PC-9 (cell line): ENCODE measurements at regions of chr19 and their contacts with region 1.

Region 1: DNA sequence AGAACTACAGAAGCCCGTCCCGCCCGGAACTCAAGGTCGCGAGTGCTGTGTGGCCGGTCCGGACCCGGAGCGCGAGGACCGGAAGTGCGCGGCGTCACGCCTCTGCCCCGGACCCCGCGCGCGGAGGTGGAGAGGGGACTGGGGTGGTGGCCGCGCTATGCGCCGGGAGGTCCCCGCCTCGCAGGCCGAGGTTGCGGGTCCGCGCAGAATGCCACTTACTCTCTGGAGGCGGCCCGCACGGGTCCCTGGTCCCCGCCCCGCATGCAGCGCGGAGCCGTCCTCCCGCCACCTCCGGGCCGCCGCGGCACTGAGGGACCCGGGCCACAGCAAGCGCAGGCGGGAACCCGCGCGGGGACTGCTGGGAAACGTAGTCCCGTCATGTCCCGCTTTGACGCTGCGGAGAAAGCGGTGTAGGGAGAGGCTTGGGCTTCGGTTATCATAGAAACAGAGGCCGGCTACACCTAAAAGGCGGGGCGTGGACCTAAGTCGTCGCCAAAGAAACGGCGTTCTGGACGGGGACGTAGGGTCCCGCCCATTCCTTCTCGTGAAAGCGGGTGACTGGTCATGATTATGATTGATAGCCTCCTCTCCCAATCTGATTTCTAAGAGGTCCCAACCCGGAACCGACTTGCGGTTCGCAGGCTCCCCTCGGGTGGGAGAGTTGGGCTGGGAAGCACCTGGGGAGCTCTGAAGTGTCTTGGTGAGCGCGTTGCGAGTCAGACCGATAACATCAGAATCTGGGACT is at the start of gene ZNF837:
- DNase-seq: peak; percentile 96 to 98
- H3K4me3 ChIP-seq: peak within 1 kb of the TSS; percentile 92
- H3K27ac ChIP-seq: no peak within 1 kb of the TSS
- H3K4me1 ChIP-seq: peaks cover 12% of the 10 kb centered on the region
- H3K27me3 ChIP-seq: no peaks in the 10 kb centered on the region
- CTCF ChIP-seq: no peak
- total RNA-seq, gene ZNF837: 3.3 and 4.1 TPM in 2 replicates

Region 2: DNA sequence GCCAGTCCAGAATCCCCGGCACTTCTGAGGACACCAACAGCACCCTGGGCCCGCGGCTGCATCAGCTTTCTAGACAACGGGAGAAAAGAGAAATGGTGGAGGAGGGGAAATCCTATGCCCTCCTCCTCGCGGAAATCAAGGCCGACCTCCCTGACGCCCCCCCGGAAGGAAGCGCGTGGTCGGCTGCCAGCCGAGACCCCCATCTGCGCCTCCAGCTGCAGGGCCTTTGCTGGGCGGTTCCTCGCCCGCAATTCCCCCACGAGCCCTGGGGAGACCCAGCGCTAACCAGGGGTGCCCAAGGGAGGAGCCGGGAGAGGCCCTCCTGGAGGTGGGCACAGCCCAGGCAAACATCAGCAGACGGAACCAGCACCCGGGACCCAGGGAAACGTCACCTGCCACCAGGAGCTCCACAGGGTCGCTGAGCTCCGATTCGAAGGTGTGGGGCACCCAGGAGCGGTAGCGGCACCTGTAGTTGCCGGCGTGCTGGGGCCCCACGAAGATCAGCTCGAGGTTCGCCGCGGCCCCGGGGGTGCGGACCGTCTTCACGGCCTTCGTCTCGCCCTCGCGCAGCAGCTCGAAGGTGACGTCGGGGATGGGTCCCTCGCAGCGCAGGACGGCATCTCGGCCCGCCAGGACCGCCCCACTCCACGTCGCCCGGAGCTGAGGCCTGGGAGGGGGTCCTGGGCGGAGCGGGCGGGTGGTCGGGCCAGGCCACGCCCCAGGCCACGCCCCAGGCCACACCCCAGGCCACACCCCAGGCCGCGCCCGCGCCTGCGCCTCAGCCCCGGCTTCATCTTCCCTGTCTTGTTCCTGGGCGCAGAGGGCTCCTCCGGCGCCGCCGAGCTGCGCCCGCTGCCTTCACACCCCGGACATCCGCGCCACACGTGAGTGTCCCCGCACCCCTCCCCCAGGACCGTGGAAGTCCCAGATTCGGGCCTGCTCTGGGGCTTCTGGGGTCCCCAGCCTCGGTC is 33.6 kb before region 1 on chr19:
- CTCF ChIA-PET with region 1: no interaction called
- POLR2A ChIA-PET with region 1: interaction called, 26 read pairs
- intact Hi-C with region 1: no loop called
- DNase-seq: no peak
- H3K4me3 ChIP-seq: no peak overlapping the region
- H3K27ac ChIP-seq: no peak overlapping the region
- H3K4me1 ChIP-seq: no peaks in the 10 kb centered on the region
- H3K27me3 ChIP-seq: no peaks in the 10 kb centered on the region
- CTCF ChIP-seq: no peak

Region 3: GRCh38 chr19:58362272-58362994 is 18.5 kb before region 1 on chr19 and contains the start of gene ZNF497:
- CTCF ChIA-PET with region 1: no interaction called
- POLR2A ChIA-PET with region 1: interaction called, 4 read pairs
- intact Hi-C with region 1: loop called (anchors 1 kb)
- DNase-seq: peak; percentile 88 to 96
- H3K4me3 ChIP-seq: peak within 1 kb of the TSS; percentile 69
- H3K27ac ChIP-seq: peak within 1 kb of the TSS; percentile 89
- H3K4me1 ChIP-seq: no peaks in the 10 kb centered on the region
- H3K27me3 ChIP-seq: no peaks in the 10 kb centered on the region
- CTCF ChIP-seq: no peak
- total RNA-seq, gene ZNF497: 7.2 and 8.6 TPM in 2 replicates

Region 4: DNA sequence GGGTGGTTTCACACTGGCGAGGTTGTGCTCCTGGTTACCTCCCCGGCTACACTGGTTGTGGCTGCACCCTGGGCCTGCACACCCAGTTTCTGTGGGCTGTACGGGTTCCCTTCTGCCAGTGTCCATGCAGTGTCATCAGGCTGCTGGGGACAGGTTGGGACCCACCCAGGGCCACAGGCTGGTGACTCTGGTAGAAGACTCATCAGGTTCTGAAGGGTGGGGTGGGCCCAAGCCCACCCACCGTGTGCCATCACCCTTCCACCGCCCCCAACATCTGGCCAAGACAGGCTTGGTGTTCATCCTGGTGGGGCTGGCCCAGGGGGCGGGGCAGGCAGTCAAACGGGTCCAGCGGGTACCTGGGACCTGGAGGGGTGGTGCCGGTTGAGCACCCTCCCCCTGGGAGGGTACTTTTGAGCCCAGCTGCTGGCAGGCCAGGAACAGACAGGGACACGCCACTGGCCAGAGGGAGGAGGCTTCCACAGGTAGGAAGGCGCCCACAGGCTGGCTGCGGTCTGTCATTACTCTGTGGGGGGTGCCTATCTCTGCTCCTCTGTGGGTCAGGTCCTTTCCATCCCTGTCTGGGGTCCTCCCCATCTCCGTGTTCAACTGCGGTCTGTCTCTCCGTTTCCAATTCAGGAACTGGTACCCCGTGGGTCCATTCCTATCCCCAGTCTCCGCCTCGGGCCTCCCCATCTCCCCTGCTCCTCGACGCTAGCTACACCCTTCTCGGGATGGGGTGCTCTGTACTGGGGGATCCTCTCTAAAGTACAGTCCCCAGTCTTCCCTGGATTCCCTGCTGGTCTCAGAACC is 14.5 kb after region 1 on chr19 and contains the start of gene RNF225:
- CTCF ChIA-PET with region 1: no interaction called
- POLR2A ChIA-PET with region 1: interaction called, 3 read pairs
- intact Hi-C with region 1: loop called (anchors 2 kb)
- DNase-seq: peak; percentile 60 to 89
- H3K4me3 ChIP-seq: no peak within 1 kb of the TSS
- H3K27ac ChIP-seq: peak within 1 kb of the TSS; percentile 66
- H3K4me1 ChIP-seq: peaks cover 27% of the 10 kb centered on the region
- H3K27me3 ChIP-seq: no peaks in the 10 kb centered on the region
- CTCF ChIP-seq: no peak
- total RNA-seq, gene RNF225: 0.61 and 0.68 TPM in 2 replicates

Region 5: GRCh38 chr19:58400916-58401839 is 20.3 kb after region 1 on chr19:
- CTCF ChIA-PET with region 1: no interaction called
- POLR2A ChIA-PET with region 1: no interaction called
- intact Hi-C with region 1: loop called (anchors 1 kb)
- DNase-seq: peak; percentile 94 to 98
- H3K4me3 ChIP-seq: peak overlapping the region; percentile 72
- H3K27ac ChIP-seq: no peak overlapping the region
- H3K4me1 ChIP-seq: peaks cover 5% of the 10 kb centered on the region
- H3K27me3 ChIP-seq: no peaks in the 10 kb centered on the region
- CTCF ChIP-seq: no peak

Region 6: GRCh38 chr19:58408152-58409009 is 27.5 kb after region 1 on chr19 and contains the start of gene ZNF584:
- CTCF ChIA-PET with region 1: no interaction called
- POLR2A ChIA-PET with region 1: no interaction called
- intact Hi-C with region 1: loop called (anchors 1 kb)
- DNase-seq: peak; percentile 76 to 91
- H3K4me3 ChIP-seq: peak within 1 kb of the TSS; percentile 73
- H3K27ac ChIP-seq: peak within 1 kb of the TSS; percentile 9; the same call in 1 of the 2 replicates
- H3K4me1 ChIP-seq: peaks cover 12% of the 10 kb centered on the region
- H3K27me3 ChIP-seq: no peaks in the 10 kb centered on the region
- CTCF ChIP-seq: no peak
- total RNA-seq, gene ZNF584: 13.5 and 18.8 TPM in 2 replicates

Region 7: GRCh38 chr19:58475714-58476497 is 95.0 kb after region 1 on chr19 and contains the start of gene ZNF446:
- CTCF ChIA-PET with region 1: no interaction called
- POLR2A ChIA-PET with region 1: no interaction called
- intact Hi-C with region 1: loop called (anchors 5 kb)
- DNase-seq: peak; percentile 84 to 90
- H3K4me3 ChIP-seq: peak within 1 kb of the TSS; percentile 68
- H3K27ac ChIP-seq: peak within 1 kb of the TSS; percentile 51
- H3K4me1 ChIP-seq: peaks cover 18% of the 10 kb centered on the region; the same call in 1 of the 2 replicates
- H3K27me3 ChIP-seq: no peaks in the 10 kb centered on the region
- CTCF ChIP-seq: no peak
- total RNA-seq, gene ZNF446: 11.0 and 16.5 TPM in 2 replicates